ENCODE measurements at regions of chr15 and their contacts with region 1.

Region 1: DNA sequence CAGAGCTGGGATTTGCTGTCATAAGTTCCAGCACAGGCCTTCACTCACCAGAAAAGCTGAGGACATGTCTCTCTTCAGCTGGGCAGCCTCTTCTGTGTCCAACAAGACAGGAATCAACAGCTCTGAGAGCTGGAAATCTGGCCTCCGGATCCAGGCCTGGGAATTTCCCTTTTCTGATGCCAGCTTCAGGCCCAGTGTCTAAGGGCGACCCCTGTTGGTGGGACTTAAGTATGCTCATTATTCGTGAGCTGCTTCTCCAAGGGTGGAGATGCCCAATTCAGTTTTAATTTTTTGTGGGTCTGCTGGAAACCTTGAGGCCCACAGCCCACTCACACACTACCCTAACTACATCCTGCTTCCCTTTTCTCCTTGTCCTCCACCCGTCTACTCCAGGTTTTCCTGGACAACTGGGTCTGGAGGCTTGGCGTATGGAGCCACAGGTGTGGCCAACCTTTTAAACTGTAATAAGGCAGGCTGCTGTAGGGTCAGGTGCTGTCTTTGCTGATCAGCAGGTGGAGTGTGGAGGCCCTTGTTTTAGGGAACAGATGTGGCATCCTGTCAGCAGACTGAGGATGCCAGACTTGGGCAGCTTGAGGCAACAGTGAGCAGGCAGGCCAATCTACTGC is 2.6 kb upstream of the CEMIP start:
- DNase-seq: peak; percentile 87
- ATAC-seq: peak; percentile 4; the same call in 1 of the 2 replicates
- H3K4me3 ChIP-seq: no peak overlapping the region
- H3K27ac ChIP-seq: peak overlapping the region; percentile 19; the same call in 1 of the 2 replicates
- H3K4me1 ChIP-seq: peaks cover 20% of the 10 kb centered on the region
- H3K27me3 ChIP-seq: no peaks in the 10 kb centered on the region
- CTCF ChIP-seq: peak; percentile 94
- POLR2A ChIP-seq: no peak
- RAD21 ChIP-seq: peak; percentile 91

Region 2: GRCh38 chr15:80183886-80184285 is 592.6 kb before region 1 on chr15:
- CTCF ChIA-PET with region 1: no interaction called
- POLR2A ChIA-PET with region 1: no interaction called
- dilution Hi-C with region 1: no loop called
- in situ Hi-C with region 1: no loop called
- intact Hi-C with region 1: loop called (anchors 2 kb)
- DNase-seq: peak; percentile 13
- ATAC-seq: no peak
- H3K4me3 ChIP-seq: no peak overlapping the region
- H3K27ac ChIP-seq: no peak overlapping the region
- H3K4me1 ChIP-seq: peaks cover 13% of the 10 kb centered on the region
- H3K27me3 ChIP-seq: no peaks in the 10 kb centered on the region
- CTCF ChIP-seq: no peak
- POLR2A ChIP-seq: no peak
- RAD21 ChIP-seq: peak; percentile 33; the same call in 1 of the 2 replicates

Region 3: GRCh38 chr15:80418892-80419537 is 357.5 kb before region 1 on chr15:
- CTCF ChIA-PET with region 1: interaction called, 3 read pairs
- POLR2A ChIA-PET with region 1: no interaction called
- dilution Hi-C with region 1: no loop called
- in situ Hi-C with region 1: no loop called
- intact Hi-C with region 1: loop called (anchors 1 kb)
- DNase-seq: peak; percentile 72
- ATAC-seq: peak; percentile 59
- H3K4me3 ChIP-seq: no peak overlapping the region
- H3K27ac ChIP-seq: peak overlapping the region; percentile 19
- H3K4me1 ChIP-seq: peaks cover 14% of the 10 kb centered on the region
- H3K27me3 ChIP-seq: no peaks in the 10 kb centered on the region
- CTCF ChIP-seq: peak; percentile 68
- POLR2A ChIP-seq: no peak
- RAD21 ChIP-seq: peak; percentile 56

Region 4: GRCh38 chr15:80550219-80550907 is 226.2 kb before region 1 on chr15:
- CTCF ChIA-PET with region 1: interaction called, 3 read pairs
- POLR2A ChIA-PET with region 1: no interaction called
- dilution Hi-C with region 1: no loop called
- in situ Hi-C with region 1: no loop called
- intact Hi-C with region 1: loop called (anchors 1 kb)
- DNase-seq: peak; percentile 98
- ATAC-seq: peak; percentile 86
- H3K4me3 ChIP-seq: peak overlapping the region; percentile 4; the same call in 1 of the 2 replicates
- H3K27ac ChIP-seq: peak overlapping the region; percentile 98
- H3K4me1 ChIP-seq: peaks cover 20% of the 10 kb centered on the region
- H3K27me3 ChIP-seq: no peaks in the 10 kb centered on the region
- CTCF ChIP-seq: no peak
- POLR2A ChIP-seq: no peak
- RAD21 ChIP-seq: no peak

Region 5: DNA sequence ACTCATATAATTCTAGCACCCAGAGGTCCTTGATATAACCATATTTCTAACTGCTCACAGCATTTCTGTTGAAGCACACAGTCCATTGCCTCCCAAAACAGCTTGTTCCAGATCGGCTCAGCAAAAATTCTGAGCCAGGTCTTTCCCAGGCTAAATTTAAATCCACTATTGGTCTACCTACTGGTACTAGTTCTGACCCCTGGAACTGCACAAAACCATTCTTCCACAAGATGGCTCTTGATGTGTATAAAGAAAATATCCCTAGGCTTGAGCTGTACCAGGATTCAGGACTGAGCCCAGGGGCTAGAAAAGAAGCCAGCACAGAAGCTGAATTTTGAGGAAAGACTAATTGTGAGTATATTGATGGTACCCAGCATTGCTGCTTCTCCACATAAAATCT is 156.9 kb before region 1 on chr15:
- CTCF ChIA-PET with region 1: interaction called, 5 read pairs
- POLR2A ChIA-PET with region 1: interaction called, 5 read pairs
- dilution Hi-C with region 1: no loop called
- in situ Hi-C with region 1: no loop called
- intact Hi-C with region 1: loop called (anchors 1 kb)
- DNase-seq: peak; percentile 43
- ATAC-seq: peak; percentile 54
- H3K4me3 ChIP-seq: no peak overlapping the region
- H3K27ac ChIP-seq: peak overlapping the region; percentile 47; the same call in 1 of the 2 replicates
- H3K4me1 ChIP-seq: peaks cover 32% of the 10 kb centered on the region
- H3K27me3 ChIP-seq: no peaks in the 10 kb centered on the region
- CTCF ChIP-seq: peak; percentile 33; the same call in 1 of the 2 replicates
- POLR2A ChIP-seq: no peak
- RAD21 ChIP-seq: peak; percentile 38

Region 6: DNA sequence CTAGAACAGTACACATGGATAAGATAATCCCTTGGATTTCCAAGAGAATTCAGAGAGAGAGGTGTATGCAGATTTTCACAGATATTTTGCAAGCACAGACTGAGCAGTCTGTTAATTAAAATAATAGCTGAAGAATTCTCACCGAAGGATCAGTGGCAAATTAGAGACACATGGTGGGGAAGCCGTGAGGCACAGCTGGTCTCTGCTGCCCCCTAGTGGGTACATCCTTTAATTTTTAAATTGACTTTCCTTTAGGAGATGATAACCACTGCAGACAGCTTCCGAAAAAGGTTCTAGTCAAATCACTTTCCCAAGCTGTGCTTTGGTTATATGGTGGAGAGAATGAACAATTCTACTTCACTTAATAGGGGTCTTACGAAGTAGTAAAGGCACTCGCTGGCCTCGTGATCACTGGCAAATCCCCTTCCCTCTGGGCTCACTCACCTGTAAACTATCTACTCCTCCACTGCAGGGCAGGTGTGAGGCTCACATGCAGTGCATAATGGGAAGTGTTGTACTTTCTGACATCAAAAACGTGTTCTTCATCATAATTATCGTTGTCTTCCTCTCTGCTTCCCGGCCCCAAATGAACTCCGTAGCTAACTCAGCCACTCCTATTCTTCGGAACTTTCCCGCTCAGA is 193.6 kb after region 1 on chr15:
- CTCF ChIA-PET with region 1: interaction called, 6 read pairs
- POLR2A ChIA-PET with region 1: no interaction called
- dilution Hi-C with region 1: no loop called
- in situ Hi-C with region 1: loop called (anchors 5 kb)
- intact Hi-C with region 1: loop called (anchors 2 kb)
- DNase-seq: peak; percentile 54
- ATAC-seq: peak; percentile 68
- H3K4me3 ChIP-seq: no peak overlapping the region
- H3K27ac ChIP-seq: no peak overlapping the region
- H3K4me1 ChIP-seq: peaks cover 13% of the 10 kb centered on the region
- H3K27me3 ChIP-seq: no peaks in the 10 kb centered on the region
- CTCF ChIP-seq: peak; percentile 86
- POLR2A ChIP-seq: 0 out of 2 replicates have a peak, but pooled peaks have one; percentile 40
- RAD21 ChIP-seq: peak; percentile 96